AG04450 (cell line): ENCODE measurements at regions of chr16 and their contacts with region 1.

Region 1: GRCh38 chr16:12095275-12096156 is 119.0 kb downstream of the SNX29 start:
- DNase-seq: peak; percentile 30
- H3K4me3 ChIP-seq: no peak overlapping the region
- H3K27ac ChIP-seq: peak overlapping the region; percentile 39
- H3K27me3 ChIP-seq: no peaks in the 10 kb centered on the region
- CTCF ChIP-seq: peak; percentile 90

Region 2: GRCh38 chr16:11994143-11995119 is 101.1 kb before region 1 on chr16:
- CTCF ChIA-PET with region 1: no interaction called
- POLR2A ChIA-PET with region 1: no interaction called
- DNase-seq: no peak
- H3K4me3 ChIP-seq: no peak overlapping the region
- H3K27ac ChIP-seq: no peak overlapping the region
- H3K27me3 ChIP-seq: no peaks in the 10 kb centered on the region
- CTCF ChIP-seq: no peak

Region 3: DNA sequence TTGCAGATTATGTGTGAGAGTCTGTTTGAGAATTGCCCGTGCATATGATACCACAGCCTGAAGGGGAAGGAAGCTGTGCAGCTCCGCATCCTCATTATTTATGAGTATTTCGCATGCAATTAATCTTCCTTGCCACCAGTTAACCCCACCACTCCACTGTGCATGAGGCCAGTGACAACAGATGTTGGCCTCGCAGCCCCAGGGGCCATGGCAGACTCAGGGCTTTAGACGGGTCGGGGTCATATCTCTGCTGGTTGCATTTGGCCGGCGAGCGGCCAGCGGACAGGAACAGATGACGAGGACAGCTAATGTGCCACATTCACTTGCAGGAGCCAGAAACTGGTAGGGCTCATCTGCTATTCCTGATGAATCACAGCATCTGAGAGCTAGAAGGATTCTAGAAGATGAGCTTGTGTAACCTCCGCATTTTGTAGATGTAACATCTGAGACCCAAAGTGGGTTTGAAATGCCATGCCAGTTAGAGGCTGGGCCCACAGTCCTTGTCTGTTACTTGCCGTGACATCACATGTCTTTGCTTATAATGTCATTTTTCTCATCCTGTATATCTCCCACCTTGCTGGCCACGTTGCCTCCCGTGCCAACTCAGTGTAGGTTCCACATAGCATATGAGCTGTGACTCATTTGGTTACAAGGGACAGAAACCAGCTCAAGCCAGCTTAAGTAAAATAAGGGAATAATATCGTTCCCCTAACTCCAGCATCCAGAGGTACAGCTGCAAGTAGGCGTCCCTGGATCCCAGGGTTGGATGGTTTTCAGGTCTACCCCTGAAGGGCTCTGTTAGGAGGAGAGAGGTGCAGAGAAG is 18.2 kb after region 1 on chr16:
- CTCF ChIA-PET with region 1: interaction called, 10 read pairs
- POLR2A ChIA-PET with region 1: no interaction called
- DNase-seq: no peak
- H3K4me3 ChIP-seq: no peak overlapping the region
- H3K27ac ChIP-seq: no peak overlapping the region
- H3K27me3 ChIP-seq: no peaks in the 10 kb centered on the region
- CTCF ChIP-seq: no peak

Region 4: GRCh38 chr16:12168074-12169000 is 72.8 kb after region 1 on chr16:
- CTCF ChIA-PET with region 1: interaction called, 13 read pairs
- POLR2A ChIA-PET with region 1: interaction called, 4 read pairs
- DNase-seq: no peak
- H3K4me3 ChIP-seq: no peak overlapping the region
- H3K27ac ChIP-seq: peak overlapping the region; percentile 21
- H3K27me3 ChIP-seq: no peaks in the 10 kb centered on the region
- CTCF ChIP-seq: no peak

Region 5: GRCh38 chr16:12228602-12229499 is 133.3 kb after region 1 on chr16:
- CTCF ChIA-PET with region 1: interaction called, 62 read pairs
- POLR2A ChIA-PET with region 1: interaction called, 4 read pairs
- DNase-seq: peak; percentile 20
- H3K4me3 ChIP-seq: no peak overlapping the region
- H3K27ac ChIP-seq: no peak overlapping the region
- H3K27me3 ChIP-seq: no peaks in the 10 kb centered on the region
- CTCF ChIP-seq: peak; percentile 86

Region 6: GRCh38 chr16:12311309-12311708 is 215.8 kb after region 1 on chr16:
- CTCF ChIA-PET with region 1: interaction called, 13 read pairs
- POLR2A ChIA-PET with region 1: no interaction called
- DNase-seq: no peak
- H3K4me3 ChIP-seq: no peak overlapping the region
- H3K27ac ChIP-seq: no peak overlapping the region
- H3K27me3 ChIP-seq: peaks cover 2% of the 10 kb centered on the region
- CTCF ChIP-seq: no peak

Region 7: GRCh38 chr16:12458591-12459358 is 363.3 kb after region 1 on chr16:
- CTCF ChIA-PET with region 1: interaction called, 12 read pairs
- POLR2A ChIA-PET with region 1: no interaction called
- DNase-seq: no peak
- H3K4me3 ChIP-seq: no peak overlapping the region
- H3K27ac ChIP-seq: peak overlapping the region; percentile 21
- H3K27me3 ChIP-seq: no peaks in the 10 kb centered on the region
- CTCF ChIP-seq: no peak